ENCODE measurements at regions of chr2 and their contacts with region 1.

Region 1: DNA sequence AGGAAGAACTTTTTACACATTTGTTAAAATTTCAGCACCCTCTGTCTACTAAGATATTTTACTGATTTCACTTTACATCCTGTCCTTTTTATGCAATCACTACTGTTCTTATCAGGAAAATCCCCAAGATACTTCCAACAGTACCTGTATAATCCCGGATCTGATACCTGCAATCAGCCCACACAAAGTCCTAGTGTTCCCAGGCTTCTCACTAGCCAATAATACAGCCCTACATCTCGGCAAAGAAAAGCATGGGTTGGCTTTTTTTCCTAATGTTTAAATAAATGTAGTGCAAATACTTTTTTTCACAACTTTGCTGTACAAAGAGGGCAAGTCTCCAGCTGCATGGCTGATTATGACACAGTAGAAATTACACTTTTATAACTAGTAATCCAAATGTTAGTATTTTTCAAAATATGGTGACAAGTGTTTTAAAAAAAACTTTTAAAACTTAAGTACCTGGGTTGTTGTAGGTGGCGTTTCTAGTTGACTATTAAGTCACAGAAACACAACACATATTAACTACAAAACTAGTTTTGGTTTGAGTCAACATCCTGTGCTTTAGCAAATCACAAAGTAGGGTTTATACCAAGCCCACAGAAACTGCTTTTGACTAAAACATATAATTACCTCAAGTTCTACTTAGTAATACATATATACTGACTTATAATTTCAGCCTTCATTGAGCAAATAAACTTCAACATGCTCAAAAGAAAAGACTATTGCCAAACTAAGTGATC is 19.5 kb downstream of the CNOT11 start:
- DNase-seq: no peak
- H3K4me3 Mint-ChIP-seq: no peak overlapping the region
- H3K27ac Mint-ChIP-seq: no peak overlapping the region
- H3K4me1 Mint-ChIP-seq: no peaks in the 10 kb centered on the region
- H3K27me3 Mint-ChIP-seq: no peaks in the 10 kb centered on the region
- CTCF ChIP-seq: no peak

Region 2: GRCh38 chr2:101282980-101283379 is 10.8 kb after region 1 on chr2:
- CTCF ChIA-PET with region 1: interaction called, 4 read pairs
- POLR2A ChIA-PET with region 1: interaction called, 16 read pairs
- intact Hi-C with region 1: no loop called
- DNase-seq: no peak
- H3K4me3 Mint-ChIP-seq: no peak overlapping the region
- H3K27ac Mint-ChIP-seq: no peak overlapping the region
- H3K4me1 Mint-ChIP-seq: no peaks in the 10 kb centered on the region
- H3K27me3 Mint-ChIP-seq: no peaks in the 10 kb centered on the region
- CTCF ChIP-seq: no peak

Measured in MCF 10A (cell line).